ENCODE measurements at regions of chr4 and their contacts with region 1.

Region 1: GRCh38 chr4:81405894-81406401 is 65.8 kb downstream of the RASGEF1B start:
- DNase-seq: no peak
- H3K4me3 ChIP-seq: peak overlapping the region in 1 of 4 experiments; percentile 30; a peak in 1 of 8 replicates
- H3K27ac ChIP-seq: no peak overlapping the region
- H3K4me1 ChIP-seq: no peaks in the 10 kb centered on the region
- H3K27me3 ChIP-seq: no peaks in the 10 kb centered on the region
- CTCF ChIP-seq: peak in 2 of 3 experiments; percentile 50 to 60; a peak in 3 of 4 replicates
- EP300 ChIP-seq: no peak
- POLR2A ChIP-seq: no peak
- RAD21 ChIP-seq: peak; percentile 70 to 77

Region 2: GRCh38 chr4:81427344-81427821 is 21.4 kb after region 1 on chr4:
- CTCF ChIA-PET with region 1: interaction called, 16 read pairs
- POLR2A ChIA-PET with region 1: no interaction called
- DNase-seq: no peak
- H3K4me3 ChIP-seq: peak overlapping the region in 1 of 4 experiments; percentile 21; a peak in 1 of 8 replicates
- H3K27ac ChIP-seq: peak overlapping the region; percentile 49; the same call in 1 of the 2 replicates
- H3K4me1 ChIP-seq: peaks cover 4 to 12% (median 8%) of the 10 kb centered on the region in 4 experiments
- H3K27me3 ChIP-seq: no peaks in the 10 kb centered on the region
- CTCF ChIP-seq: no peak
- EP300 ChIP-seq: no peak
- POLR2A ChIP-seq: no peak
- RAD21 ChIP-seq: no peak

Region 3: GRCh38 chr4:81452452-81453006 is 46.6 kb after region 1 on chr4:
- CTCF ChIA-PET with region 1: interaction called, 10 read pairs
- POLR2A ChIA-PET with region 1: no interaction called
- DNase-seq: no peak
- H3K4me3 ChIP-seq: no peak overlapping the region
- H3K27ac ChIP-seq: no peak overlapping the region
- H3K4me1 ChIP-seq: peaks cover 0 to 6% (median 2%) of the 10 kb centered on the region in 4 experiments; a peak in 1 of 7 replicates
- H3K27me3 ChIP-seq: no peaks in the 10 kb centered on the region
- CTCF ChIP-seq: no peak
- EP300 ChIP-seq: no peak
- POLR2A ChIP-seq: no peak
- RAD21 ChIP-seq: no peak

Region 4: DNA sequence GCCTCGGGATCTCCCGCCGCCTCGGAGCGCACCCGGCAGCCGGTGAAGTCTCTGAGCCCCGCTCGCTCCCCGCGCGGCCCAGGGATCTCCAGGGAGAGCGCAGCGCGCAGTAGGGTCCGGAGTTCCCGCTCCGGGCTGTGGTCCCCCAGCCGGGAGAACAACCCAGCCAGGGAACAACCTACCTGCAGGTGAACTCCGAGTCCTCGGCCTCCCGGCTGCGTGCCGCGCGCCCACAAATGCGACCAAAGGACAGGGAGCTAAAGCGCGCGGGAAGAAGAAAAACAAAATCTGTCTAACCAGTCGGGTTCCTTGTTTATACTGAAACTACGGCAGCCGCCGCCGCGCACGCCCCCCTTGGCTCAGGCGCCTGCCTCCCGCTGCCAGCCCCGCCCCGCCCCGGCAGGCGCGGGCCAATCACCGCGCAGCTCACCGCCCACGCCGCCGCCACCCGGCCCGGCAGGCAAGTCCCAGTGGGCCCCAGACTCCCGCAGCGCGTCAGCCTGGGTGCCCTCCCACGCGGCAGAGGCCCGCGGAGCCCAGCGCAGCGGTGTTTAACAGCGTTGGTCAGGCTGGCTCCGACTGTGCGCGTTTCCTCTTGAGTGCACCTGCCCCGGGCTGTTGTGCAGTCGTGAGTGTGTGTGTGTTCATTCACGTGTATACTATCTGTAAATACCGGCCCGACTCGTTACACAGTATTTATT is 65.8 kb after region 1 on chr4 and contains the start of gene RASGEF1B:
- CTCF ChIA-PET with region 1: interaction called, 34 read pairs
- POLR2A ChIA-PET with region 1: no interaction called
- DNase-seq: peak in 1 of 2 experiments; percentile 82
- H3K4me3 ChIP-seq: peak within 1 kb of the TSS; percentile 62 to 79 (median 70)
- H3K27ac ChIP-seq: no peak within 1 kb of the TSS
- H3K4me1 ChIP-seq: peaks cover 0 to 6% (median 2%) of the 10 kb centered on the region in 4 experiments; a peak in 5 of 7 replicates
- H3K27me3 ChIP-seq: peaks cover 2 to 10% (median 7%) of the 10 kb centered on the region in 4 experiments; a peak in 6 of 7 replicates
- CTCF ChIP-seq: no peak
- EP300 ChIP-seq: no peak
- POLR2A ChIP-seq: no peak
- RAD21 ChIP-seq: peak in 1 of 2 experiments; percentile 8; a peak in 1 of 4 replicates
- total RNA-seq, gene RASGEF1B: 4.6 and 4.7 TPM in 2 replicates

Region 5: GRCh38 chr4:81688085-81688484 is 282.1 kb after region 1 on chr4:
- CTCF ChIA-PET with region 1: interaction called, 10 read pairs
- POLR2A ChIA-PET with region 1: no interaction called
- DNase-seq: no peak
- H3K4me3 ChIP-seq: no peak overlapping the region
- H3K27ac ChIP-seq: no peak overlapping the region
- H3K4me1 ChIP-seq: peaks cover 0 to 5% (median 0%) of the 10 kb centered on the region in 4 experiments; a peak in 1 of 7 replicates
- H3K27me3 ChIP-seq: no peaks in the 10 kb centered on the region
- CTCF ChIP-seq: peak in 2 of 3 experiments; percentile 22 to 42; a peak in 2 of 4 replicates
- EP300 ChIP-seq: no peak
- POLR2A ChIP-seq: no peak
- RAD21 ChIP-seq: peak; percentile 63 to 65

Region 6: DNA sequence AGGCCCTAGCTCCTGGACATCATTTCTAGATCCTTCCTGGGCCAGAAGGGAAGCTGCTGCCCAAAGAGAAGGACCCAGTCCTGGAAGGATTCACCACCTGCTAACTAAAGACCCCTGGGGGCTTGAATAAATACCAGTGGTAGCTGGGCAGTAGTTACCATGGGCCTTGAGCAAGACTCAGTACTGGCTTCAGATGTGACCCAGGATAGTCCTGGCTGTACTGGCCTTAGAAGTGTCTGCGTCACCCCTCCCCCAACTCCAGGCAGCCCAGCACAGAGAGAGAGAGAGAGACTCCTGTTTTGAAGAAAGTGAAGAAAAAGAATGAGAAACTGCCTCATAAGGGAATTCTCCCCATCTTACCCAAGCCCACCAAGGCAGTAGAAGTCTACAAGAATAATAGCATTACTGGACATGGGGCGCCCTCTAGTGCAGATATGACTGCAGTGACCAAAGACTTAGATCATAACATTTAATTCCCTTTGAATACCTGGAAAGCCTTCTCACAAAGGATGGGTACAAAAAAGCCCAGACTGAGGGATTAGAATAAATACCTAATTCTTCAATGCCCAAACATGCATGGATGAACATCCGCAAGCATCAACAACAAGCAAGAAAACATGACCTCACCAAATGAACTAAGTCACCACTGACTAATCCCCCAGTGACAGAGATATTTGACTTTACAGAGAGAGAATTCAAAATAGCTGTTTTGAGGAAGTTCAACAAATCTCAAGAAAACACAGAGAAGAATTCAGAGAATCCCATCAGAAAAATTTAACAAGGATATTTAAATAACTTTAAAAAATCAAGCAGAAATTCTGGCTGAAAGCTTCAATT is 796.1 kb after region 1 on chr4:
- CTCF ChIA-PET with region 1: interaction called, 11 read pairs
- POLR2A ChIA-PET with region 1: no interaction called
- DNase-seq: peak in 1 of 2 experiments; percentile 71
- H3K4me3 ChIP-seq: no peak overlapping the region
- H3K27ac ChIP-seq: no peak overlapping the region
- H3K4me1 ChIP-seq: no peaks in the 10 kb centered on the region
- H3K27me3 ChIP-seq: no peaks in the 10 kb centered on the region
- CTCF ChIP-seq: peak in 2 of 3 experiments; percentile 79 to 84; a peak in 3 of 4 replicates
- EP300 ChIP-seq: no peak
- POLR2A ChIP-seq: no peak
- RAD21 ChIP-seq: peak; percentile 97 to 99

Region 7: GRCh38 chr4:82268050-82268825 is 862.3 kb after region 1 on chr4:
- CTCF ChIA-PET with region 1: interaction called, 19 read pairs
- POLR2A ChIA-PET with region 1: no interaction called
- DNase-seq: peak in 1 of 2 experiments; percentile 51
- H3K4me3 ChIP-seq: no peak overlapping the region
- H3K27ac ChIP-seq: no peak overlapping the region
- H3K4me1 ChIP-seq: peaks cover 0 to 6% (median 1%) of the 10 kb centered on the region in 4 experiments; a peak in 3 of 7 replicates
- H3K27me3 ChIP-seq: no peaks in the 10 kb centered on the region
- CTCF ChIP-seq: peak; percentile 69 to 94 (median 83)
- EP300 ChIP-seq: no peak
- POLR2A ChIP-seq: no peak
- RAD21 ChIP-seq: peak; percentile 96 to 97

Measured in H1 (cell line).